Ovary (tissue), 10 donors: ENCODE measurements at regions of chr17 and their contacts with region 1.

Region 1: DNA sequence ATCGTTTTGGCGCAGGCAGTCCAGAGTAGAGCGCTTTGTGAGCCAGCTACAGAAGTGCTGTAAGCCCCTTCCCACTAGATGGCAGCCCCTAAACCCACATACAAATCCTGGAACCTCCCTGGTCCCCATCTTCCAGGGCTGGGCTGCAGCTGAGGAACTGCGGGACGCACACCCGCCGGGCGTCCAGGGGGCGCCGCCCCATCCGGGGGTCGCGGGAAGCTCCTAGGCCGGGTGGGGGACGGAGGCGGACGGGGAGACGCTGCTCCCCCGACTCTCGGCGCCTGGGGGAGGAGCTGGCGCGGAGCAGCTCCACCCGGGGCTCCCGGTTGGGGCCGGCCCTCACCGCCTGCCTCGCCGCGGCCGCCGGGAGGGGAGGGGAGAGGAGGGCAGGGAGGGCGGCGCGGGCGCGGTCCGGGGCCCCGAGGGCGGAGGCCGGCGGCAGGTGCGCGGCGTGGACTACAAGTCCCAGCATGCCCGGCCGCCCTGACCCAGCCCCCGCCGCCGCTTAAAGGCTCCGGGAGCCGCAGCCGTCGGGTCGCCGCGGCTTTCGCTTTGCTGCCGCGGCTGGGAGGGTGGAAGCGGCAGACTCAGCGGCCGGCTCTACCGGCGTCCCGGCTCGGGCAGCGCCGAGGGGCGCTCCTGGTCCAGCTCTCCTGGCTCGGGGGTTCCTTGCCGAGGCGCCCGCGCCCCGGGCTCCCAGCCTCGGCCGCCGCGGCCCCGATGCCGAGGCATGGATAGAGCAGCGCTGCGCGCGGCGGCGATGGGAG is at the start of gene KSR1:
- DNase-seq: peak; percentile 83 to 88 (median 85)
- H3K4me3 ChIP-seq: peak within 1 kb of the TSS; percentile 85
- H3K27ac ChIP-seq: peak within 1 kb of the TSS; percentile 75 to 98
- H3K4me1 ChIP-seq: peaks cover 6% of the 10 kb centered on the region
- H3K27me3 ChIP-seq: no peaks in the 10 kb centered on the region
- CTCF ChIP-seq: peak; percentile 49 to 61 (median 56)
- EP300 ChIP-seq: no peak
- POLR2A ChIP-seq: peak; percentile 67
- total RNA-seq, gene KSR1: 29.2 to 84.8 (median 39.5) TPM

Region 2: GRCh38 chr17:27236717-27237315 is 219.3 kb before region 1 on chr17:
- intact Hi-C with region 1: loop called in 2 of 4 experiments (anchors 10 kb)
- DNase-seq: peak; percentile 58 to 89 (median 72)
- H3K4me3 ChIP-seq: no peak overlapping the region
- H3K27ac ChIP-seq: no peak overlapping the region
- H3K4me1 ChIP-seq: no peaks in the 10 kb centered on the region
- H3K27me3 ChIP-seq: no peaks in the 10 kb centered on the region
- CTCF ChIP-seq: peak; percentile 52 to 94 (median 91)
- EP300 ChIP-seq: no peak
- POLR2A ChIP-seq: no peak

Region 3: GRCh38 chr17:27353461-27354050 is 102.5 kb before region 1 on chr17:
- intact Hi-C with region 1: loop called in 2 of 4 experiments (anchors 5 to 10 kb)
- DNase-seq: peak; percentile 91 to 95 (median 94)
- H3K4me3 ChIP-seq: peak overlapping the region; percentile 59
- H3K27ac ChIP-seq: peak overlapping the region; percentile 80 to 94
- H3K4me1 ChIP-seq: no peaks in the 10 kb centered on the region
- H3K27me3 ChIP-seq: no peaks in the 10 kb centered on the region
- CTCF ChIP-seq: peak; percentile 88 to 99 (median 99)
- EP300 ChIP-seq: peak; percentile 7
- POLR2A ChIP-seq: peak; percentile 94

Region 4: GRCh38 chr17:27413792-27414191 is 42.3 kb before region 1 on chr17:
- intact Hi-C with region 1: no loop called
- DNase-seq: no peak
- H3K4me3 ChIP-seq: no peak overlapping the region
- H3K27ac ChIP-seq: no peak overlapping the region
- H3K4me1 ChIP-seq: no peaks in the 10 kb centered on the region
- H3K27me3 ChIP-seq: no peaks in the 10 kb centered on the region
- CTCF ChIP-seq: no peak
- EP300 ChIP-seq: no peak
- POLR2A ChIP-seq: no peak

Region 5: DNA sequence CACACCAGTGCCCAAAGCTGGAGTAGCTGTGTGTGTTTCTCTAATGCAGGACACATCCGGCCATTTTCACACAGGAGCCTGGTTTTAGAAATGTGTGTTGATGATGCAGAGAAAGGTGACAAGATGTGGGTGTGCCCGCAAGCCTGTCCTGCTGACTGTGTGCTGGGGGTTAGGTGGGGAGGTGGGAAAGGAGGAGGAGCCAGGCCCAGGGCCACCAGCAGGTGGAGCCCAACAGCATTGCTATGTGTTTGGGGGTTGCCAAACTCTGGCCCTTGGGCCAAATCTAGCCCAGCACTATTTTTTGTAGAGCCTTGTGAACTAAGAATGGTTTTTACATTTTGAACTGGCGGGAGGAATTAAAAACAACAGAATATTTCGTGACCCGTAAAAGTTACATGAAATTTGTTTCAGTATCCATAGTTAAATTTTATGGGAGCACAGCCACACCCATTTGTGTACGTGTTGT is 113.2 kb after region 1 on chr17:
- intact Hi-C with region 1: loop called in 1 of 4 experiments (anchors 10 kb)
- DNase-seq: peak in 2 of 5 donors; percentile 45 to 59
- H3K4me3 ChIP-seq: no peak overlapping the region
- H3K27ac ChIP-seq: no peak overlapping the region
- H3K4me1 ChIP-seq: peaks cover 6% of the 10 kb centered on the region
- H3K27me3 ChIP-seq: no peaks in the 10 kb centered on the region
- CTCF ChIP-seq: no peak
- EP300 ChIP-seq: no peak
- POLR2A ChIP-seq: no peak